Activated CD8-positive, alpha-beta memory T cell treated with anti-CD3 and anti-CD28 coated beads, Interleukin-2, amount 10 ng/mL, durations not matched to agents 7 days and 5 days (primary cell): ENCODE measurements at regions of chr22 and their contacts with region 1.

Region 1: GRCh38 chr22:43273902-43274484 is 69.2 kb downstream of the SCUBE1 start:
- DNase-seq: peak; percentile 66
- ATAC-seq: peak; percentile 71
- H3K4me3 Mint-ChIP-seq: no peak overlapping the region
- H3K27ac Mint-ChIP-seq: no peak overlapping the region
- H3K4me1 Mint-ChIP-seq: peaks cover 15% of the 10 kb centered on the region
- H3K27me3 Mint-ChIP-seq: peaks cover 4% of the 10 kb centered on the region

Region 2: DNA sequence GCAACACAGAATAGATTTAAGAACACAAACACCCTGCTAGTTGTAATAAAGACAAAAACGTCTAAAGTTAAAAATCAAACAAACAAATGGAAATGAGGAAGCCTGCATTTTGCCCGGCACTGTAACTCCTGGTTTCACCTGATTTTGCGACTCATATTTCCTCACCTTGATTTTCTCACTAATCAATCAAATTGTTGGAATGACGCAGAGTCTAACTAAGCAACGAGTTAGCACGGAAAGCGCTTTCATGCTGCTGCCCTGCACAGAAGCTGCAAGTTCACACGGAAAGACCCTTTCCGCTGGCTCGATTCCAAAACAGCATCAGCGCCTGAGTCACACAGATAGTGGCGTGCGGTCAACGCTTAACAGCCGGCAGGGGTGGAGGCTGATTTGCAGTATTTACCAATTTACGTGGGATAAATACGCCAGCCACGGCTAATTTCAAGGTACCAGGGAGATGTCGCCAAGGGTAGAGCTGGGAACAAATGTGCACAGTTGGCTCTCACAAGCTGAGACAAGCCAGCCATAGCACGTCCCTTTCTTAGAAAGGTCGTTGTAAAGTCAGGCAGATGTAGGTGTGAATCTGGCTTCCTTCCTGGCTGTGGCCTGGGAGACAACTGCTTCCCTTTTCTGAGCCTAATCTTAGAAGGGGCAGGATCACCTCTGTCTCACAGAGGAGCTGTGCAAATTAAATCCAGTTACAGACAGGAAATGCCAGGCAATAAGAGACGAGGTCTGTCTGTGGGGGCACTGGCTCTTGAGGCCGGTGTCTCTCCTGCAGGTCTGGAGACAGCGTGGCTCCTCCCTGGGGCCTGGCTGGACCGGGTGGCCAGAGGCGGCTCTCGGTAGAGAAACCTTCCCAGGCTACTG is 10.1 kb before region 1 on chr22:
- CTCF ChIA-PET with region 1: interaction called, 38 read pairs
- DNase-seq: peak; percentile 96
- ATAC-seq: peak; percentile 90
- H3K4me3 Mint-ChIP-seq: peak overlapping the region; percentile 68
- H3K27ac Mint-ChIP-seq: peak overlapping the region; percentile 92
- H3K4me1 Mint-ChIP-seq: peaks cover 31% of the 10 kb centered on the region
- H3K27me3 Mint-ChIP-seq: peaks cover 6% of the 10 kb centered on the region

Region 3: GRCh38 chr22:43289976-43290721 is 16.2 kb after region 1 on chr22:
- CTCF ChIA-PET with region 1: interaction called, 12 read pairs
- DNase-seq: no peak
- ATAC-seq: no peak
- H3K4me3 Mint-ChIP-seq: no peak overlapping the region
- H3K27ac Mint-ChIP-seq: peak overlapping the region; percentile 39
- H3K4me1 Mint-ChIP-seq: peaks cover 17% of the 10 kb centered on the region
- H3K27me3 Mint-ChIP-seq: no peaks in the 10 kb centered on the region

Region 4: DNA sequence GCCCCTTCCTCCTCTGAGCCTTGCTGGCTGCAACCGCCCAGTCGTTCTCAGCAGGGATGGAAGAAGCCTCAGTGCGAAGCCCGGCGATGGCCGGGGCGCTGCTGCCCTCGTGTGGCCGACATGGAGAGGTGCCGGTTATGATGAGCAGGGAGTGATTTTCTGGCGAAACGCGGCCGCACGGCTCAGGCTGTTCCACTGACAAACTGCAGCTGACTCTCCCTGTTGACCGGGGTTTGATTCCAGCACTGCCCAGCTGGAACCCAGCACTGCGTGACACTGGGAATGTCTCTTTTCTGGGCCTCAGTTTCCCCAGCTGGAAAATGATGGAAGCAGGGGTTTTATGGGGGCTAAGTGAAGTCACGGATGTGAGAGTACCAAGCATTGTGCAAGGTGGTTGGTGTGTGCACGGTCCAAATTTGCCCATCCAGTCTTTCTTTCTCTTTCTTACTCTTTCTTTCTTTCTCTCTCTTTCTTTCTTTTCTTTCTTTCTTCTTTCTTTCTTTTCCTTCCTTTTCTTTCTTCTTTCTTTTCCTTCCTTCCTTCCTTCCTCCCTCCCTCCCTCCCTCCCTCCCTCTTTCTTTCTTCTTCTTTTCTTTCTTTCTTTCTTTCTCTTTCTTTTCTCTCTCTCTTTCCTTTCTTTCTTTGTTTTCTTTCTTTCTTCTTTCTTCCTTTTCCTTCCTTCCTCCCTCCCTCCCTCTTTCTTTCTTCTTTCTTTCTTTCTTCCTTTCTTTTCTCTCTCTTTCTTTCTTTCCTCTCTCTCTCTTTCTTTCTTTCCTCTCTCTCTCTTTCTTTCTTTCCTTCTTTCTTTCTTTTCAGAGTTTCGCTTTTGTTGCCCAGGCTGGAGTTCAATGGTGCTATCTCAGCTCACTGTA is 112.0 kb after region 1 on chr22:
- CTCF ChIA-PET with region 1: interaction called, 230 read pairs
- DNase-seq: peak; percentile 83
- ATAC-seq: peak; percentile 89
- H3K4me3 Mint-ChIP-seq: no peak overlapping the region
- H3K27ac Mint-ChIP-seq: no peak overlapping the region
- H3K4me1 Mint-ChIP-seq: peaks cover 36% of the 10 kb centered on the region
- H3K27me3 Mint-ChIP-seq: peaks cover 61% of the 10 kb centered on the region